ENCODE measurements at regions of chr19 and their contacts with region 1.

Region 1: GRCh38 chr19:45615795-45616708 is 14.0 kb upstream of the GPR4 start:
- DNase-seq: peak; percentile 99
- H3K4me3 ChIP-seq: peak overlapping the region; percentile 37 to 61 (median 52)
- H3K27ac ChIP-seq: peak overlapping the region; percentile 72
- H3K4me1 ChIP-seq: peaks cover 17% of the 10 kb centered on the region
- H3K27me3 ChIP-seq: no peaks in the 10 kb centered on the region
- CTCF ChIP-seq: no peak
- POLR2A ChIP-seq: peak; percentile 66

Region 2: DNA sequence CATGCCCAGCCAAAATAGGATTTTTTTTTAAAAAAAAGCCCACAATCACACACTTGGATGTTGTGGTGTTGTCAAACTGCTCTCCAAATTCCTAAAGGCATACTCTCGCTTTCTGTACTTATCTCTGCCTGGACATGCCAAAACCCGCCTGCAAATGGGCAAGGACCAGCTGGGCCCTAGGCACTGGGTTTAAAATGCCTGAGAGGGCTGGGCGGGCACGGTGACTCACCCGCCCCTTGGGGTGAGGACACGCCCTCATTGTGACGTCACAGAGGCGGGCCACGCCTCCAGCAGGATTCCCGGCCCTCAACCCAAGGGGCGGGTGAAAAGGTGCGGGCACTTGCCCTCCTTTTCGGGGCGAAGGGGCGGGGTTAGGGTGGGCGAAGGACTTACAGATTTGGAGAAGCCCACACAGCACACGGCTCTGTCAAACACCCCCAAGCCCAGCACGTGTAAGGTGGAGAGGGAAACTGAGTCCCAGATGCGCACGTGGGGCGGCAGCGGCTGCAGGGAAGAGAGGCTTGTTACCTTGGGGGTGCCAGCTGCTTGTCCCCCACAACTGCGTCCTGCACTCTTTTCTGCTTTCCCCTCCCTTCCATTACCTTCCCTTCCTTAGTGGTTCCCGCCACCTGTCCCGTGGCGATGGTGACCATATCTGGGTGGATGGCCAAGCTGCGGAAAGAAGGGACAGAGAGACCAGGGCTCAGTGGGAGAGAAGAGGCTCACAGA is 16.6 kb after region 1 on chr19:
- CTCF ChIA-PET with region 1: interaction called, 12 read pairs
- POLR2A ChIA-PET with region 1: interaction called, 6 read pairs
- dilution Hi-C with region 1: no loop called
- intact Hi-C with region 1: loop called (anchors 1 kb)
- DNase-seq: peak; percentile 80
- H3K4me3 ChIP-seq: peak overlapping the region in 1 of 3 experiments; percentile 13
- H3K27ac ChIP-seq: no peak overlapping the region
- H3K4me1 ChIP-seq: peaks cover 8% of the 10 kb centered on the region
- H3K27me3 ChIP-seq: no peaks in the 10 kb centered on the region
- CTCF ChIP-seq: no peak
- POLR2A ChIP-seq: no peak

Region 3: DNA sequence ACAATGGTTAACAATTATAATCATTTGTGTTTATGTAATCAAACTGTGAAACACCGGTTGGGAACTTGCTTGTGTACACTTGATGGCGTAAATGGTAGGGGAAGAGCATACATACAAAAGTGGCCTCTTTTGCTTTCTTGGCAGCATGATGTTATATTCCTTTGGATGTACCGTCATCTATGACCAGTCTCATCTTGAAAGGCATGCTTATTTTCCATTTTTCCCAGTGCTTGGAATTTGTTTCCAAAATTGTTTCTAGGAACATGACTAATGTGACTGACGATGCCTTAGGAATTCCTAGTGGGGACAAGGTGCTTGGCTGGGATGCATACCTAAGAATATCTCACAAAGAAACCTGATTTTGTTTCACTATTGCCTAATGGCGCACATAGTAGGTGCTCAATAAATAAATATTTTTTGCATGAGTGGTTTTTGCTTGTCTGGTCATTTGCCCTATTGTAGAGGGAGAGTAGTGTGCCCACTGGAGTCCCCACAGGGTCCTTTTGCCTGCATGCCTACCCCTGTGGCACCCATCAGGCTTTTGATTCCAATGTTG is 1560.1 kb after region 1 on chr19:
- CTCF ChIA-PET with region 1: no interaction called
- POLR2A ChIA-PET with region 1: no interaction called
- dilution Hi-C with region 1: no loop called
- intact Hi-C with region 1: no loop called
- DNase-seq: peak; percentile 80
- H3K4me3 ChIP-seq: no peak overlapping the region
- H3K27ac ChIP-seq: peak overlapping the region; percentile 97
- H3K4me1 ChIP-seq: peaks cover 49% of the 10 kb centered on the region
- H3K27me3 ChIP-seq: no peaks in the 10 kb centered on the region
- CTCF ChIP-seq: no peak
- POLR2A ChIP-seq: no peak

Measured in endothelial cell of umbilical vein (primary cell).